Breast epithelium (tissue), 4 donors: ENCODE measurements at regions of chr19 and their contacts with region 1.

Region 1: GRCh38 chr19:55216461-55217198 is 7.3 kb upstream of the PTPRH start:
- DNase-seq: peak; percentile 23 to 70
- H3K4me3 ChIP-seq: peak overlapping the region; percentile 31 to 64 (median 51)
- H3K27ac ChIP-seq: peak overlapping the region in 1 of 2 donors; percentile 67
- H3K4me1 ChIP-seq: no peaks in the 10 kb centered on the region
- H3K27me3 ChIP-seq: no peaks in the 10 kb centered on the region
- CTCF ChIP-seq: no peak
- POLR2A ChIP-seq: no peak

Region 2: GRCh38 chr19:55133639-55134444 is 82.8 kb before region 1 on chr19:
- intact Hi-C with region 1: no loop called
- DNase-seq: no peak
- H3K4me3 ChIP-seq: no peak overlapping the region
- H3K27ac ChIP-seq: no peak overlapping the region
- H3K4me1 ChIP-seq: no peaks in the 10 kb centered on the region
- H3K27me3 ChIP-seq: peaks cover 0 to 46% of the 10 kb centered on the region in 2 donors
- CTCF ChIP-seq: no peak
- POLR2A ChIP-seq: no peak

Region 3: DNA sequence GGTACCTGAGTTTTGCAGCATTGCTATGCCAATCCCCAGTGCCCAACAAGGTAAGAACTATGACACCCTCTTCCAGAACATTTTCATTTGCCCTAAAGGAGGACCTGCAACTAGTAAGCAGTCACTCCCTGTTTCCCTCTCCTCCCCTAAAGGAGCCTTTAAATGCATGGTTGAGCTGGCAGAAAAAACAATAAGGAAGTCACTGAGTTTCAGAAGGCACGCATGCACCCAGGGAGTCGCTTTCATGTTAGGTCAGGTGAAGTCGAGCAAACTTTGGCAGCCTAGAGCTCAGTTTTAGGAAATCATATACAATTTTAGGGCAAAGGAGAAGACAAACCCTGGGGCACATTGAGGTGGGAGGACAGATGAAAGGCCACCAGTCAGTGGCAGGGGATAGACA is 603.4 kb after region 1 on chr19:
- intact Hi-C with region 1: loop called (anchors 5 kb)
- DNase-seq: no peak
- H3K4me3 ChIP-seq: no peak overlapping the region
- H3K27ac ChIP-seq: no peak overlapping the region
- H3K4me1 ChIP-seq: no peaks in the 10 kb centered on the region
- H3K27me3 ChIP-seq: no peaks in the 10 kb centered on the region
- CTCF ChIP-seq: no peak
- POLR2A ChIP-seq: no peak